T-cell (primary cell): ENCODE measurements at regions of chr20 and their contacts with region 1.

Region 1: DNA sequence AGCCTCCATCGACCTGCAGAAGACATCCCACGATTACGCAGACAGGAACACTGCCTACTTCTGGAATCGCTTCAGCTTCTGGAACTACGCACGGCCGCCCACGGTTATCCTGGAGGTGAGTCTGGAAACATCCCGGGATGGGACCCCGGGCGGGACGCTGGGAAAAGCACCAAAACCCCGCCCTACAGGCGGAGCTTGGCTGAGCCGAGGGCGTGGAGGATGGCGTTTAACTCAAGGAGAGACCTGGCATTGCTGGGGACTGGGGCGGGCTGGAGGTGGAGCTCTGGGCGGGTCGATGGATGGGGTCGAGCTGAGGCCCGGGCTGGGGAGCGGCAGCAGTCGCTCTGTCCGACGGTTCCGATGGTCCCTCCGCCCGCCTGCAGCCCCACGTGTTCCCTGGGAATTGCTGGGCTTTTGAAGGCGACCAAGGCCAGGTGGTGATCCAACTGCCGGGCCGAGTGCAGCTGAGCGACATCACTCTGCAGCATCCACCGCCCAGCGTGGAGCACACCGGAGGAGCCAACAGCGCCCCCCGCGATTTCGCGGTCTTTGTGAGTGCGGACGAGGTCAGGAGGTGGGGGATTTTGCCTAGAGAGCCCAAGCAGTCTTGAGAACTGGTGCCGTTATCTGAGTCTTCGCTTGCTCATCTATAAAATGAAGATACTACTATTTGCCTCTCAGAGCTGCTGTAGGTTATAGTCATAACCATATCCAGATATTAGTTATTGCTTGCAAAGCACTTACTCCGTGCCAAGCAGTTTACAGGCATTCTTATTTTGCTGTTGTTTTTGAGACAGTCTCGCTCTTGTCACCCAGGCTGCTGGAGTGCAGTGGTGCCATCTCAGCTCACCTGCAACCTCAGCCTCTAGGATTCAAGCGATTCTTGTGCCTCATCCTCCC is 3.8 kb downstream of the SPAG4 start:
- DNase-seq: peak; percentile 57 to 89 (median 72)
- ATAC-seq: peak; percentile 26 to 35 (median 33)
- H3K4me3 ChIP-seq: peak overlapping the region; percentile 68 to 78
- H3K4me3 Mint-ChIP-seq: peak overlapping the region; percentile 79 to 86 (median 83)
- H3K27ac ChIP-seq: peak overlapping the region; percentile 57
- H3K27ac Mint-ChIP-seq: peak overlapping the region; percentile 50 to 84
- H3K4me1 ChIP-seq: peaks cover 17 to 47% of the 10 kb centered on the region in 2 experiments
- H3K4me1 Mint-ChIP-seq: peaks cover 35 to 45% (median 42%) of the 10 kb centered on the region in 3 donors
- H3K27me3 ChIP-seq: peaks cover 0 to 4% of the 10 kb centered on the region in 2 experiments
- H3K27me3 Mint-ChIP-seq: no peaks in the 10 kb centered on the region

Region 2: DNA sequence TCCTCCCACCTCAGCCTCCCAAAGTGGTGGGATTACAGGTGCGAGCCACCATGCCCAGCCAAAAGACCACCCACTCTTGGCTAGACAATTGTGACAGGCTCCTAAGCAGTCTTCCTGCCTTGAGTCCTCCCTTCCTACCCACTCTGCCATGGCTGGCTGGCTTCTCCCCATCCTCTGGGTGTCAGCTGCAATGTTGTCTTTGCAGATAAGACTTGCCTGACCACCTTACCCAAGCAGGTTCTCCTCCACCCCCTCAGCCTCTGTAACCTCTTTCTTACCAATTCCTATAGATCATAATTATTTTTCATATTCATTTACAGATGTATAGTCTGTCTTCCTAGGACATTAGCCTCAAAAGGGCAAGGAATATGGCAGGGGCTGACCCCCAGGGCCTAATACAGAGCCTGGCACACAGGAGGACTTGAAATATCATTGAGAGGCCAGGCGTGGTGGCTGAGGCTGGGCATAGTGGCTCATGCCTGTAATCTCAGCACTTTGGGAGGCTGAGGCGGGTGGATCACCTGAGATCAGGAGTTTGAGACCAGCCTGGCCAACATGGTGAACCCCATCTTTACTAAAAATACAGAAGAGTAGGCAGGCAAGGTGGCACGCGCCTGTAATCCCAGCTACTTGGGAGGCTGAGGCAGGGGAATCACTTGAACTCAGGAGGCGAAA is 32.6 kb before region 1 on chr20:
- CTCF ChIA-PET with region 1: no interaction called
- POLR2A ChIA-PET with region 1: no interaction called
- DNase-seq: no peak
- ATAC-seq: no peak
- H3K4me3 ChIP-seq: no peak overlapping the region
- H3K4me3 Mint-ChIP-seq: no peak overlapping the region
- H3K27ac ChIP-seq: no peak overlapping the region
- H3K27ac Mint-ChIP-seq: no peak overlapping the region
- H3K4me1 ChIP-seq: no peaks in the 10 kb centered on the region
- H3K4me1 Mint-ChIP-seq: peaks cover 0 to 3% (median 0%) of the 10 kb centered on the region in 3 donors
- H3K27me3 ChIP-seq: peaks cover 0 to 7% of the 10 kb centered on the region in 2 experiments
- H3K27me3 Mint-ChIP-seq: no peaks in the 10 kb centered on the region

Region 3: GRCh38 chr20:35601008-35601973 is 18.2 kb before region 1 on chr20:
- CTCF ChIA-PET with region 1: interaction called, 9 to 17 read pairs
- POLR2A ChIA-PET with region 1: interaction called, 3 to 7 read pairs
- DNase-seq: peak; percentile 61 to 89 (median 75)
- ATAC-seq: peak; percentile 91 to 95 (median 92)
- H3K4me3 ChIP-seq: peak overlapping the region; percentile 52 to 69
- H3K4me3 Mint-ChIP-seq: peak overlapping the region; percentile 72 to 81 (median 75)
- H3K27ac ChIP-seq: no peak overlapping the region
- H3K27ac Mint-ChIP-seq: no peak overlapping the region
- H3K4me1 ChIP-seq: peaks cover 0 to 19% of the 10 kb centered on the region in 2 experiments
- H3K4me1 Mint-ChIP-seq: peaks cover 0 to 14% (median 7%) of the 10 kb centered on the region in 3 donors
- H3K27me3 ChIP-seq: peaks cover 4 to 53% of the 10 kb centered on the region in 2 experiments
- H3K27me3 Mint-ChIP-seq: peaks cover 0 to 11% of the 10 kb centered on the region in 2 donors

Region 4: GRCh38 chr20:35664544-35665221 is 45.2 kb after region 1 on chr20 and contains the starts of genes CPNE1 and RBM12:
- CTCF ChIA-PET with region 1: interaction called, 3 to 13 read pairs
- POLR2A ChIA-PET with region 1: interaction called, 8 to 13 read pairs
- DNase-seq: peak; percentile 87 to 96 (median 92)
- ATAC-seq: peak; percentile 81 to 85 (median 83)
- H3K4me3 ChIP-seq: peak within 1 kb of the TSS; percentile 88 to 99
- H3K4me3 Mint-ChIP-seq: peak within 1 kb of the TSS; percentile 92 to 95 (median 93)
- H3K27ac ChIP-seq: peak within 1 kb of the TSS; percentile 100
- H3K27ac Mint-ChIP-seq: peak within 1 kb of the TSS; percentile 99
- H3K4me1 ChIP-seq: peaks cover 30 to 39% of the 10 kb centered on the region in 2 experiments
- H3K4me1 Mint-ChIP-seq: peaks cover 48 to 50% (median 50%) of the 10 kb centered on the region in 3 donors
- H3K27me3 ChIP-seq: no peaks in the 10 kb centered on the region
- H3K27me3 Mint-ChIP-seq: no peaks in the 10 kb centered on the region
- total RNA-seq, gene CPNE1: 284 to 408 (median 324) TPM
- total RNA-seq, gene RBM12: 89.5 to 113 (median 109) TPM

Region 5: GRCh38 chr20:35893942-35894341 is 274.5 kb after region 1 on chr20:
- CTCF ChIA-PET with region 1: no interaction called
- POLR2A ChIA-PET with region 1: no interaction called
- DNase-seq: no peak
- ATAC-seq: no peak
- H3K4me3 ChIP-seq: no peak overlapping the region
- H3K4me3 Mint-ChIP-seq: no peak overlapping the region
- H3K27ac ChIP-seq: no peak overlapping the region
- H3K27ac Mint-ChIP-seq: no peak overlapping the region
- H3K4me1 ChIP-seq: no peaks in the 10 kb centered on the region
- H3K4me1 Mint-ChIP-seq: peaks cover 5 to 9% (median 6%) of the 10 kb centered on the region in 3 donors
- H3K27me3 ChIP-seq: no peaks in the 10 kb centered on the region
- H3K27me3 Mint-ChIP-seq: no peaks in the 10 kb centered on the region